Transverse colon (tissue), 4 donors: ENCODE measurements at regions of chr3 and their contacts with region 1.

Region 1: GRCh38 chr3:58013973-58014649 is 5.9 kb downstream of the FLNB start:
- DNase-seq: peak; percentile 30
- H3K4me3 ChIP-seq: no peak overlapping the region
- H3K27ac ChIP-seq: peak overlapping the region; percentile 89 to 95 (median 90)
- H3K4me1 ChIP-seq: peaks cover 43 to 90% (median 83%) of the 10 kb centered on the region in 4 donors
- H3K27me3 ChIP-seq: no peaks in the 10 kb centered on the region
- CTCF ChIP-seq: no peak
- EP300 ChIP-seq: no peak
- POLR2A ChIP-seq: no peak

Region 2: DNA sequence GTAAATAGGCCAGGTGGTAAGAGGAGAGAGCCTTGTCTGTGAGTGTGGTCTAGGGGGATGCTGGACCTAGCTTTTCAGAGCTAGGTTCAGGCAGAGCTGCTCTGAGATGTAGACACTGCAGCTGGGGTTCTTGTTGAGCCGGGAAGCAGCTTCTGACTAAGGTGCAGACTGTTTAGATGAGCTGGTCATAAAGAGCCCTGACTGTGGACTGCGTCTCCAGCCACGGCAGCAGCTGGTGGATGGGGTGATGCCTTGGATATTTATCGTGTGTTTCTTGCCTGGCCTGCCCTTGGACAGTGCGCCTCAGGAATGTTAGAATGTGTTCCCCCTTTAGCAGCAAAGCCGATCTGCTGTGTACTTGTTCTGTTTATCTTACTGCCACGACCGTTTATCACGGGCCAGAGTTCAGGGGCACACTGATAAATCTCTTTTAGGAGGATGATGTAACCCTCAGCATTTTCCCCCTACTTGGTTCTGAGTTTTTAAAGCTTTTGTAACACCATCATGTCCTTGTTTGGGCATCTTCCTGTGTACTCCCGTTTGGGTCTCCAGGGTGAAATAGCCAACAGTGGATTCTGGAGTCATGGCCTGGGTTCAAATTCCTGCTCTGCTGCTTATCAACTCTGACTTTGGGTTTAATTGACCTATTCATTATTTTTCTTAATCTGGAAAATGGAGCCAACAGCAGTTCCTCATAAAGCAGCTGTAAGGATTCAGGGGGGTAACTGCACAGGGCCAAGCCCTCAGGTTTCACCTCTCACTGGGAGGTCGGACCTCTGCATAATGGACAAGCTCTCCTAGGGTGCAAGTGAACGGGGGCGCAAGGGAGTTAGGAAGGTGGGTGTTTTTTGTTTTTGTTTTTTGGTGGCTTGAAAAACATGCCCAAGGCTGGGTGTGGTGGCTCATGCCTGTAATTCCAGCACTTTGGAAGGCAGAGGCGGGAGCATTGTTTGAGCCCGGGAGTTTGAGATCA is 45.5 kb after region 1 on chr3:
- in situ Hi-C with region 1: no loop called
- intact Hi-C with region 1: loop called (anchors 10 kb)
- DNase-seq: peak; percentile 64
- H3K4me3 ChIP-seq: no peak overlapping the region
- H3K27ac ChIP-seq: peak overlapping the region; percentile 82
- H3K4me1 ChIP-seq: peaks cover 32 to 82% (median 55%) of the 10 kb centered on the region in 4 donors
- H3K27me3 ChIP-seq: no peaks in the 10 kb centered on the region
- CTCF ChIP-seq: no peak
- EP300 ChIP-seq: peak; percentile 93
- POLR2A ChIP-seq: peak; percentile 51

Region 3: DNA sequence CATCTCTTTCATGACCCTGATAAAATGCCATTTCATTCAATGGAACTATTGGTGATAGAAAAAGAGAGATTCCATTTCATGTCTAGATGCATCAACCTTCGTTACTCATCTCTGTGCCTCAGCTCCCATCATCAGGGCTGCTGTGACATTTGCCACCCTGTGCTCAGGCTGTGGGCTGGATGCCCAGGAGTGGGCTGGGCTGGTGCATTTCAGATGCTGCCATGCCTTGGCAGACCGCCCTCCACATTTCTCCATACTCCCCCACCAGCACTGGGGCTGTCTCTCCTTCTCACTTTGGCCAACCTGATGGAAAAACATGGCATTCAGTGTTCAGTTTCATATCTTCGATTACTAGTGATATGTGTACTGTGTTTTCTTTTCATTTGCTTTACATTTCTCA is 137.5 kb after region 1 on chr3:
- in situ Hi-C with region 1: loop called in 1 of 4 experiments (anchors 10 kb)
- intact Hi-C with region 1: no loop called
- DNase-seq: no peak
- H3K4me3 ChIP-seq: no peak overlapping the region
- H3K27ac ChIP-seq: peak overlapping the region in 2 of 4 donors; percentile 2 to 6
- H3K4me1 ChIP-seq: no peaks in the 10 kb centered on the region
- H3K27me3 ChIP-seq: no peaks in the 10 kb centered on the region
- CTCF ChIP-seq: no peak
- EP300 ChIP-seq: no peak
- POLR2A ChIP-seq: no peak